Activated CD4-positive, alpha-beta memory T cell treated with anti-CD3 and anti-CD28 coated beads for 36 hours (primary cell): ENCODE measurements at regions of chr3 and their contacts with region 1.

Region 1: GRCh38 chr3:187041362-187042307 is 97.7 kb downstream of the RPL39L start:
- DNase-seq: peak; percentile 70
- H3K4me3 Mint-ChIP-seq: peak overlapping the region; percentile 47
- H3K27ac Mint-ChIP-seq: peak overlapping the region; percentile 92
- H3K4me1 Mint-ChIP-seq: peaks cover 82% of the 10 kb centered on the region
- H3K27me3 Mint-ChIP-seq: no peaks in the 10 kb centered on the region

Region 2: GRCh38 chr3:187130346-187131066 is 88.9 kb after region 1 on chr3:
- CTCF ChIA-PET with region 1: no interaction called
- POLR2A ChIA-PET with region 1: no interaction called
- intact Hi-C with region 1: loop called (anchors 1 kb)
- DNase-seq: peak; percentile 71
- H3K4me3 Mint-ChIP-seq: peak overlapping the region; percentile 50
- H3K27ac Mint-ChIP-seq: peak overlapping the region; percentile 96
- H3K4me1 Mint-ChIP-seq: peaks cover 34% of the 10 kb centered on the region
- H3K27me3 Mint-ChIP-seq: no peaks in the 10 kb centered on the region